Endothelial cell of umbilical vein (primary cell): ENCODE measurements at regions of chr9 and their contacts with region 1.

Region 1: GRCh38 chr9:88829276-88829675 is 162.0 kb upstream of the S1PR3 start:
- DNase-seq: no peak
- H3K4me3 ChIP-seq: no peak overlapping the region
- H3K27ac ChIP-seq: no peak overlapping the region
- H3K4me1 ChIP-seq: peaks cover 6% of the 10 kb centered on the region
- H3K27me3 ChIP-seq: no peaks in the 10 kb centered on the region
- CTCF ChIP-seq: no peak
- POLR2A ChIP-seq: no peak

Region 2: DNA sequence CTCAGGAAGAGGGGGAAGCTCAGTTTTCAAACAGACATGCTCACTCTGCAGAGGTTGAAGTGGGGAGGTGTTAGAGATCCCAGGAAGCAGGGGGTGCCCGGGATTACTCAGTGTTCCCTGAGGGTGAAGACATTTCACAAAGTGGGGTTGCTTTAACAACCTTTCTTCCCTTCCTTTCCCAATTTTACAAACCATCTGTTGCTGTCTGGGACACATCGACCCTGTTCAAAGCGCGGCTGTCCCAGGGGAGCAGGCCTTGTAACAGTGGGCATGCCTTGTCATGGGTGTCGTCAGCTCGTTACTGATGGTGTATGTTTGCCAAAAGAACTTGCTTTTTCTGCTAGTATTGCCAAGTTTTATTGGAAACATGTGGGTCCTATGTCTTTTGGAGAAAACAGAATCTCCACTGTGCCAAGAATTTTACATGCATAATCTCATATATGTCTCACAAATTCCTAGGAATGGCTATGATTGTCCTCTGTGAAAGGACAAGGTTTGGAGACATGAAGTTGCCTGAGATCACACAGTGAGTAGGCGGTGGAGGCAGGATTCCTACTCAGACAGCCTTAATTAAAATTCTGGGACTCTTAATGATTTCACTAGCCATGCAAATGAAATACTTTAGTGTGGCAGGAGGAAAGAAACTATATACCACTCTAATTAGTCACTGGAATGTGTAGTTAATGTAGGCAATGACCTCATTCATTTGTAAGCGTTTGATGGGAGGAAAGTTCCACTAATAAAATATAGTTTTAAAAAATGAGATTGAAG is 95.4 kb before region 1 on chr9:
- CTCF ChIA-PET with region 1: no interaction called
- POLR2A ChIA-PET with region 1: no interaction called
- dilution Hi-C with region 1: no loop called
- intact Hi-C with region 1: loop called (anchors 5 kb)
- DNase-seq: peak; percentile 57
- H3K4me3 ChIP-seq: no peak overlapping the region
- H3K27ac ChIP-seq: peak overlapping the region; percentile 48
- H3K4me1 ChIP-seq: peaks cover 29% of the 10 kb centered on the region
- H3K27me3 ChIP-seq: no peaks in the 10 kb centered on the region
- CTCF ChIP-seq: no peak
- POLR2A ChIP-seq: no peak

Region 3: DNA sequence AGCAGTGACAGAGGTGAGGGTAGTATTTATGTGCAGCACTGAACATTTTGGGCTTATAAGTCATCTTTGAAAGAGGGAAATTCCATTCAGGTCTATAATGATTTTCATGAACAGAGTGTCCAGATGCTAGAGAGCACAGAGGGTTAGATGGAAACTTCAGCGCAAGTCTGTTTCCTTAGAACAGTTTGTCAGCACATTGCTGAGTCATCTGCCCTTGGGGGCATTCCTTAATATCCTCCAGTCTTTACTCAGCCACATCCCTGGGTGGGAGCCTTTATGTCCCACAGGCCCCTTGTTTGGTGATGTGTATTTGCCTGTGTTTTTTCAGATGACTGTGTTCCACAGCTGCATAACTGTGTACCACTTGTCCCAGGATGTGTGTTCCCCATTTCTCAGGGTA is 23.5 kb after region 1 on chr9:
- CTCF ChIA-PET with region 1: no interaction called
- POLR2A ChIA-PET with region 1: no interaction called
- dilution Hi-C with region 1: no loop called
- intact Hi-C with region 1: no loop called
- DNase-seq: peak; percentile 92
- H3K4me3 ChIP-seq: no peak overlapping the region
- H3K27ac ChIP-seq: peak overlapping the region; percentile 69
- H3K4me1 ChIP-seq: peaks cover 11% of the 10 kb centered on the region
- H3K27me3 ChIP-seq: no peaks in the 10 kb centered on the region
- CTCF ChIP-seq: no peak
- POLR2A ChIP-seq: peak; percentile 24